RWPE1 (cell line): ENCODE measurements at regions of chr17 and their contacts with region 1.

Region 1: GRCh38 chr17:75632863-75633485 is at the start of gene SMIM5:
- DNase-seq: peak; percentile 85
- H3K27ac ChIP-seq: peak within 1 kb of the TSS; percentile 70
- CTCF ChIP-seq: peak; percentile 98

Region 2: GRCh38 chr17:75601057-75602051 is 31.6 kb before region 1 on chr17:
- CTCF ChIA-PET with region 1: interaction called, 26 read pairs
- POLR2A ChIA-PET with region 1: no interaction called
- DNase-seq: peak; percentile 43
- H3K27ac ChIP-seq: no peak overlapping the region
- CTCF ChIP-seq: peak; percentile 80

Region 3: DNA sequence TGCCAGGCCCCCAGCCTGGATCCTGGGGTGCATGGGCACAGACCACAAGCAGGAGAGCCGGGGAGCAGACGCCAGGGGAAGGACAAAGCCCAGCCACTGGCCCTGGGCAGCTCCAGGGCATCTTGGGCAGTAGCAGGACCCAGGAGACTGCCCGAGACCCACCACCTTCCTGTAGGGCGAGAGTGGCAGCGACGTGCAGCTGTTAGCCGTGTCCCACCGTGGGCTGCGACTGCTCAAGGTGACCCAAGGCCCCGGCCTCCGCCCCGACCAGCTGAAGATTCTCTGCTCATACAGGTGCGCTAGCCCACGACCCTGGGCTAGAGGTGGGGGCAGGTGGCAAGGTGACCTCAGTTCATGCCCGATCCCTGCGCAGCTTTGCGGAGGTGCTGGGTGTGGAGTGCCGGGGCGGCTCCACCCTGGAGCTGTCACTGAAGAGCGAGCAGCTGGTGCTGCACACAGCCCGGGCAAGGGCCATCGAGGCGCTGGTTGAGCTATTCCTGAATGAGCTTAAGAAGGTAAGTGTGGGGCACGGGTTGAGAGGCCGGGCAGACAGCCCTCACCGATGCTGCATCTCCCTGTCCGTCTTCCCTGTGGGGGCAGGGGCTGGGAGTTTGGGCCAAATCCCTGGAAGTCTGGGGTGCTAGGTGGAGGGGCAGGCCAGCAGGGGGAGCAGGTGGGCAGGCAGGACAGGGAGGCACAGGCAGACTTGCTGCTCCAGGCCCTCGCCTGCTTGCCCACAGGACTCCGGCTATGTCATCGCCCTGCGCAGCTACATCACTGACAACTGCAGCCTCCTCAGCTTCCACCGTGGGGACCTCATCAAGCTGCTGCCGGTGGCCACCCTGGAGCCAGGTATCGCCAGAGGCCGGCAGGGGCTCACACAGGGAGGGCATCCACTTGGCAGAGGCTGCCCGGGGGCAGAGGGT is 13.2 kb before region 1 on chr17:
- CTCF ChIA-PET with region 1: interaction called, 50 read pairs
- POLR2A ChIA-PET with region 1: no interaction called
- DNase-seq: no peak
- H3K27ac ChIP-seq: no peak overlapping the region
- CTCF ChIP-seq: peak; percentile 50

Region 4: GRCh38 chr17:75652915-75653549 is 20.1 kb after region 1 on chr17:
- CTCF ChIA-PET with region 1: interaction called, 54 read pairs
- POLR2A ChIA-PET with region 1: interaction called, 3 read pairs
- DNase-seq: peak; percentile 26
- H3K27ac ChIP-seq: peak overlapping the region; percentile 10; the same call in 1 of the 2 replicates
- CTCF ChIP-seq: peak; percentile 79

Region 5: GRCh38 chr17:75749545-75750389 is 116.8 kb after region 1 on chr17:
- CTCF ChIA-PET with region 1: interaction called, 21 read pairs
- POLR2A ChIA-PET with region 1: interaction called, 4 read pairs
- DNase-seq: peak; percentile 55
- H3K27ac ChIP-seq: peak overlapping the region; percentile 98
- CTCF ChIP-seq: peak; percentile 87